IMR-90 (cell line): ENCODE measurements at regions of chr7 and their contacts with region 1.

Region 1: GRCh38 chr7:142338633-142339501 is 81.0 kb upstream of the PRSS58 start:
- DNase-seq: peak; percentile 14
- ATAC-seq: no peak; the same call in 1 of the 2 replicates
- H3K4me3 ChIP-seq: no peak overlapping the region
- H3K27ac ChIP-seq: no peak overlapping the region
- H3K4me1 ChIP-seq: no peaks in the 10 kb centered on the region
- H3K27me3 ChIP-seq: peaks cover 2% of the 10 kb centered on the region; the same call in 1 of the 2 replicates
- CTCF ChIP-seq: peak; percentile 34
- POLR2A ChIP-seq: no peak
- RAD21 ChIP-seq: peak; percentile 38

Region 2: GRCh38 chr7:142308918-142309317 is 29.9 kb before region 1 on chr7:
- CTCF ChIA-PET with region 1: no interaction called
- POLR2A ChIA-PET with region 1: no interaction called
- dilution Hi-C with region 1: no loop called
- in situ Hi-C with region 1: no loop called
- intact Hi-C with region 1: loop called (anchors 1 kb)
- DNase-seq: no peak
- ATAC-seq: no peak
- H3K4me3 ChIP-seq: no peak overlapping the region
- H3K27ac ChIP-seq: no peak overlapping the region
- H3K4me1 ChIP-seq: no peaks in the 10 kb centered on the region
- H3K27me3 ChIP-seq: no peaks in the 10 kb centered on the region
- CTCF ChIP-seq: no peak
- POLR2A ChIP-seq: no peak
- RAD21 ChIP-seq: no peak